ENCODE measurements at regions of chr7 and their contacts with region 1.

Region 1: DNA sequence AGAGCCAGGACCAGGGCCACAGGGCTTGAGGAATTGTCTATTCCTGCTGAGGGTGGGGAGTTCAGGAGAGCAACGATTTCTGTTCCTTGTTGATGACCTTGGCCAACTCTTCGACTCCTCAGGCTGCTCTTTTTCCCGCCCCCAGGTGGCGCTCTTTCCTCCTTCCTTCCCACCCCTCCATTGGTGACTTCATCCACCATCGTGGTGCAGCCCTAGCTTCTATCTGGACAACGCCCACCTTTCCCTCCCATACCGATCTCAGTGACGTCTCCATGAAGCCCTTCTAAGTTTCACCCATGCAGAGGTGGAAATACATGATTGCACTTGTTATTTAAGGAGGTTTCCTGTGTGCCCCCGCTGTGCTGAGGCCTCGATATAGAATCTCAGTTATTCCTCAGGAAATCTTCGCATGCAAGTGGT is 22.1 kb upstream of the CARD11 start:
- DNase-seq: peak in 33 of 35 experiments; percentile 33 to 82 (median 48)
- ATAC-seq: peak in 3 of 4 experiments; percentile 15 to 57 (median 21)
- H3K4me3 ChIP-seq: no peak overlapping the region
- H3K4me3 Mint-ChIP-seq: peak overlapping the region; percentile 18 to 55 (median 18)
- H3K27ac ChIP-seq: peak overlapping the region; percentile 51
- H3K27ac Mint-ChIP-seq: peak overlapping the region; percentile 89 to 91
- H3K4me1 ChIP-seq: peaks cover 31 to 85% of the 10 kb centered on the region in 2 experiments
- H3K4me1 Mint-ChIP-seq: peaks cover 78 to 83% (median 78%) of the 10 kb centered on the region in 3 donors
- H3K27me3 ChIP-seq: no peaks in the 10 kb centered on the region
- H3K27me3 Mint-ChIP-seq: no peaks in the 10 kb centered on the region

Region 2: GRCh38 chr7:2451171-2452073 is 614.3 kb before region 1 on chr7:
- CTCF ChIA-PET with region 1: no interaction called
- POLR2A ChIA-PET with region 1: no interaction called
- DNase-seq: peak; percentile 32 to 83 (median 70)
- ATAC-seq: peak; percentile 87 to 96 (median 90)
- H3K4me3 ChIP-seq: peak overlapping the region; percentile 12 to 35
- H3K4me3 Mint-ChIP-seq: peak overlapping the region; percentile 13 to 66 (median 61)
- H3K27ac ChIP-seq: no peak overlapping the region
- H3K27ac Mint-ChIP-seq: no peak overlapping the region
- H3K4me1 ChIP-seq: peaks cover 3 to 20% of the 10 kb centered on the region in 2 experiments
- H3K4me1 Mint-ChIP-seq: peaks cover 5 to 15% (median 10%) of the 10 kb centered on the region in 3 donors
- H3K27me3 ChIP-seq: peaks cover 0 to 10% of the 10 kb centered on the region in 2 experiments
- H3K27me3 Mint-ChIP-seq: no peaks in the 10 kb centered on the region

Region 3: GRCh38 chr7:3092468-3092867 is 26.7 kb after region 1 on chr7:
- CTCF ChIA-PET with region 1: interaction called in 1 of 2 experiments, 39 read pairs
- POLR2A ChIA-PET with region 1: interaction called in 1 of 2 experiments, 6 read pairs
- DNase-seq: peak; percentile 49 to 89 (median 74)
- ATAC-seq: peak; percentile 73 to 86 (median 76)
- H3K4me3 ChIP-seq: no peak overlapping the region
- H3K4me3 Mint-ChIP-seq: peak overlapping the region; percentile 36 to 86 (median 64)
- H3K27ac ChIP-seq: peak overlapping the region; percentile 95
- H3K27ac Mint-ChIP-seq: peak overlapping the region; percentile 96 to 99
- H3K4me1 ChIP-seq: peaks cover 57 to 79% of the 10 kb centered on the region in 2 experiments
- H3K4me1 Mint-ChIP-seq: peaks cover 60 to 75% (median 68%) of the 10 kb centered on the region in 3 donors
- H3K27me3 ChIP-seq: no peaks in the 10 kb centered on the region
- H3K27me3 Mint-ChIP-seq: no peaks in the 10 kb centered on the region

Region 4: GRCh38 chr7:3117488-3118231 is 51.9 kb after region 1 on chr7:
- CTCF ChIA-PET with region 1: interaction called, 3 to 14 read pairs
- POLR2A ChIA-PET with region 1: no interaction called
- DNase-seq: peak in 20 of 35 experiments; percentile 16 to 56 (median 30)
- ATAC-seq: peak in 2 of 4 experiments; percentile 62 to 67
- H3K4me3 ChIP-seq: peak overlapping the region; percentile 37 to 58
- H3K4me3 Mint-ChIP-seq: peak overlapping the region in 2 of 3 donors; percentile 75 to 85
- H3K27ac ChIP-seq: peak overlapping the region; percentile 30
- H3K27ac Mint-ChIP-seq: peak overlapping the region in 1 of 2 donors; percentile 95
- H3K4me1 ChIP-seq: peaks cover 0 to 16% of the 10 kb centered on the region in 2 experiments
- H3K4me1 Mint-ChIP-seq: peaks cover 37 to 62% (median 58%) of the 10 kb centered on the region in 3 donors
- H3K27me3 ChIP-seq: no peaks in the 10 kb centered on the region
- H3K27me3 Mint-ChIP-seq: peaks cover 0 to 2% of the 10 kb centered on the region in 2 donors

Region 5: DNA sequence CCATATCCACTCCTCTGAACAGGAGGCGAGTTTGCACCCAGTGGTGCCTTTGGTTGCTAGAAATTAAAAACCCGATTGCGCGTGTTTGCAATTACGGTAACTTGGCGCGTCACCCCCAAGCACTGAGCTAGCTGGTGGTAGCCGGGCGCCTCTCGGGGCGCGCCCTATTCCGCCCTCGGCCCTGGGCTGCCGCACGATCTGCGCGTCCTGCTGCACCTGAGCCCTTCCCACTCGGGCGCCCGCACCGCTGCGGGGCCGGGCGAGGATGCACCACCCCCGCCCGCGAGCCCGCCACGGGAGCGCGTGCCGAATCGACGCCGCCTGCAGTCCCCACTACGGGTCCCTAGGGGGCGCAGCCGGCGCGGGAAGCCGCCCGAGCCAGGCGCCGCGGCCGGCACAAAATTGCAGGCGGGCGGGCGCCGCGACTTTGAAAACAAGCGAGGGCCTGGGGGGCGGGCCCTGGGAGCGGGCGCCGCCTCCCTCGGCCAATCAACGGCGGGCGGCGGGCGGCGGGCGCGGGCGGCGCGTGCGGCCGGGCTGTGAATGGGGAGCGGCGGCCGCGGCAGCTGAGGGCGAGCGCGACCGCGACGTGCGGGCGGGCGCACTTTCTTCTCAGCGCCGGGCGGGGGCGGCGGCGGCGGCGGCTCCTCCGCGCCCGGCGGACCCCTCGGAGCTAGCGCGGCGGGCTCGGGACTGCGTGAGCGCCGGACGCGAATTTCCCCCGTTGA is 235.1 kb after region 1 on chr7 and contains the start of gene SDK1:
- CTCF ChIA-PET with region 1: no interaction called
- POLR2A ChIA-PET with region 1: no interaction called
- DNase-seq: peak; percentile 73 to 94 (median 86)
- ATAC-seq: peak; percentile 88 to 91 (median 90)
- H3K4me3 ChIP-seq: peak within 1 kb of the TSS; percentile 39 to 79
- H3K4me3 Mint-ChIP-seq: peak within 1 kb of the TSS; percentile 75 to 79 (median 76)
- H3K27ac ChIP-seq: no peak within 1 kb of the TSS
- H3K27ac Mint-ChIP-seq: no peak within 1 kb of the TSS
- H3K4me1 ChIP-seq: peaks cover 10 to 21% of the 10 kb centered on the region in 2 experiments
- H3K4me1 Mint-ChIP-seq: peaks cover 11 to 16% (median 12%) of the 10 kb centered on the region in 3 donors
- H3K27me3 ChIP-seq: peaks cover 3 to 22% of the 10 kb centered on the region in 2 experiments
- H3K27me3 Mint-ChIP-seq: peaks cover 4 to 28% of the 10 kb centered on the region in 2 donors
- total RNA-seq, gene SDK1: 0.47 to 1.7 (median 0.63) TPM

Region 6: GRCh38 chr7:3453398-3453797 is 387.7 kb after region 1 on chr7:
- CTCF ChIA-PET with region 1: no interaction called
- POLR2A ChIA-PET with region 1: no interaction called
- DNase-seq: no peak
- ATAC-seq: no peak
- H3K4me3 ChIP-seq: no peak overlapping the region
- H3K4me3 Mint-ChIP-seq: no peak overlapping the region
- H3K27ac ChIP-seq: no peak overlapping the region
- H3K27ac Mint-ChIP-seq: no peak overlapping the region
- H3K4me1 ChIP-seq: no peaks in the 10 kb centered on the region
- H3K4me1 Mint-ChIP-seq: no peaks in the 10 kb centered on the region
- H3K27me3 ChIP-seq: peaks cover 0 to 6% of the 10 kb centered on the region in 2 experiments
- H3K27me3 Mint-ChIP-seq: peaks cover 0 to 10% of the 10 kb centered on the region in 2 donors